Transverse colon (tissue), 4 donors: ENCODE measurements at regions of chr15 and their contacts with region 1.

Region 1: GRCh38 chr15:81308260-81308659 is 15.7 kb downstream of the STARD5 start:
- DNase-seq: no peak
- H3K4me3 ChIP-seq: no peak overlapping the region
- H3K27ac ChIP-seq: no peak overlapping the region
- H3K4me1 ChIP-seq: peaks cover 0 to 23% (median 5%) of the 10 kb centered on the region in 4 donors
- H3K27me3 ChIP-seq: no peaks in the 10 kb centered on the region
- CTCF ChIP-seq: no peak
- EP300 ChIP-seq: no peak
- POLR2A ChIP-seq: no peak

Region 2: DNA sequence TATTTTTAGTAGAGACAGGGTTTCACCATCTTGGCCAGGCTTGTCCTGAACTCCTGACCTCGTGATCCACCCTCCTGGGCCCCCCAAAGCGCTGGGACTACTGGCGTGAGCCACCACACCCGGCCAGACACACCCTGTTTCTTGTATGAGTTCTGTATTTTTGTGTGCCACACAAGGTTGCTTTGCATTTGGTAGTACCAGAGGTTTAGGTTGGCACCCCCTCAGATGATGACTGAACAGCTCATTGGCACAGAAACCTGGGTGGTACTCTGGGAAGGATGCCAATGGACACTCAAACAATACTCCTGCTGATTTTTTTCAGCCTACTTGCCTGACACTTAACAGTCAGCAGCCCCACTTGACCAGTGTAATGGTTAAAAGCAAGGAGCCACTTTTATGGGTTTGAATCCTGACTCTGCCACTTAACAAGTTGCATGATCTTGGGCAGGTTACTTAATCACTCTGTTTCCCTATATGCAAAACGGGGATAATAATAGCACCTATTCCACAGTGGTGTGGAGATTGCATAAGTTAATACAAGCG is 1298.1 kb before region 1 on chr15:
- in situ Hi-C with region 1: no loop called
- intact Hi-C with region 1: loop called (anchors 5 kb)
- DNase-seq: no peak
- H3K4me3 ChIP-seq: no peak overlapping the region
- H3K27ac ChIP-seq: peak overlapping the region in 1 of 4 donors; percentile 12
- H3K4me1 ChIP-seq: no peaks in the 10 kb centered on the region
- H3K27me3 ChIP-seq: no peaks in the 10 kb centered on the region
- CTCF ChIP-seq: no peak
- EP300 ChIP-seq: no peak
- POLR2A ChIP-seq: no peak